ENCODE measurements at regions of chr13 and their contacts with region 1.

Region 1: GRCh38 chr13:20127577-20128466 is 33.0 kb downstream of the GJA3 start:
- DNase-seq: peak; percentile 64
- ATAC-seq: peak; percentile 80
- H3K4me3 Mint-ChIP-seq: peak overlapping the region; percentile 67
- H3K27ac Mint-ChIP-seq: no peak overlapping the region
- H3K4me1 Mint-ChIP-seq: no peaks in the 10 kb centered on the region
- H3K27me3 Mint-ChIP-seq: peaks cover 8% of the 10 kb centered on the region; the same call in 1 of the 2 replicates
- CTCF ChIP-seq: no peak

Region 2: DNA sequence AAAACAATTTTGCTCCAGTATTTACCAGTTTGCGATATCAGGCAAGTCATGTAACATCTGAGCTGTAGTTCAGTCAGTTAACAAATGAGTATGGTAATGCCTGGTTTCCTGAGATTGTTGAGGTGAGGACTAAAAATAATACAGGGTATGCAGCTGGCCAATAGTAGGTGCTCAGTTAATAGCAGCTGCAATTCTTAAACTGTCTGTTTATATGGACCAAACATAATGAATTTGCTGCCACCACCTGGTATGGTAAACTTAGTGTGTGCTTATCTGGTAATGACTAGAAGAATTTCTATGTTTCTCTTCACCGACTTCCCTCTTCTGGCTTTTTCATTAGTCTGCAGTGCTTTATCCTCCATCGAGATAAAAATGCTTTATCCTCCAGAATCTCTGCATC is 160.2 kb before region 1 on chr13:
- CTCF ChIA-PET with region 1: no interaction called
- POLR2A ChIA-PET with region 1: no interaction called
- DNase-seq: no peak
- ATAC-seq: no peak
- H3K4me3 Mint-ChIP-seq: no peak overlapping the region
- H3K27ac Mint-ChIP-seq: no peak overlapping the region
- H3K4me1 Mint-ChIP-seq: peaks cover 15% of the 10 kb centered on the region
- H3K27me3 Mint-ChIP-seq: no peaks in the 10 kb centered on the region
- CTCF ChIP-seq: no peak

Region 3: GRCh38 chr13:20106742-20107141 is 21.1 kb before region 1 on chr13:
- CTCF ChIA-PET with region 1: interaction called, 12 read pairs
- POLR2A ChIA-PET with region 1: no interaction called
- DNase-seq: no peak
- ATAC-seq: no peak
- H3K4me3 Mint-ChIP-seq: peak overlapping the region; percentile 9
- H3K27ac Mint-ChIP-seq: no peak overlapping the region
- H3K4me1 Mint-ChIP-seq: peaks cover 18% of the 10 kb centered on the region
- H3K27me3 Mint-ChIP-seq: peaks cover 4% of the 10 kb centered on the region; the same call in 1 of the 2 replicates
- CTCF ChIP-seq: no peak

Region 4: GRCh38 chr13:20160847-20161274 is 33.0 kb after region 1 on chr13 and contains the start of gene GJA3:
- CTCF ChIA-PET with region 1: interaction called, 32 read pairs
- POLR2A ChIA-PET with region 1: no interaction called
- DNase-seq: peak; percentile 71
- ATAC-seq: peak; percentile 78
- H3K4me3 Mint-ChIP-seq: peak within 1 kb of the TSS; percentile 84
- H3K27ac Mint-ChIP-seq: no peak within 1 kb of the TSS
- H3K4me1 Mint-ChIP-seq: peaks cover 16% of the 10 kb centered on the region
- H3K27me3 Mint-ChIP-seq: peaks cover 68% of the 10 kb centered on the region
- CTCF ChIP-seq: no peak
- total RNA-seq, gene GJA3: 0.48 to 0.85 TPM (median 0.82 TPM) in 3 replicates

Measured in WTC11 (cell line).